ENCODE measurements at regions of chr15 and their contacts with region 1.

Region 1: GRCh38 chr15:70770863-70771262 is 7.5 kb upstream of the UACA start:
- DNase-seq: no peak
- ATAC-seq: no peak
- H3K4me3 ChIP-seq: no peak overlapping the region
- H3K27ac ChIP-seq: peak overlapping the region in 2 of 4 donors; percentile 7 to 13
- H3K4me1 ChIP-seq: peaks cover 23% of the 10 kb centered on the region in 2 donors
- H3K27me3 ChIP-seq: no peaks in the 10 kb centered on the region
- CTCF ChIP-seq: no peak
- POLR2A ChIP-seq: no peak

Region 2: GRCh38 chr15:70806992-70807712 is 36.3 kb after region 1 on chr15:
- in situ Hi-C with region 1: no loop called
- intact Hi-C with region 1: loop called (anchors 5 kb)
- DNase-seq: peak; percentile 22 to 46
- ATAC-seq: no peak
- H3K4me3 ChIP-seq: no peak overlapping the region
- H3K27ac ChIP-seq: peak overlapping the region in 1 of 4 donors; percentile 2
- H3K4me1 ChIP-seq: peaks cover 0 to 14% of the 10 kb centered on the region in 2 donors
- H3K27me3 ChIP-seq: no peaks in the 10 kb centered on the region
- CTCF ChIP-seq: no peak
- POLR2A ChIP-seq: no peak

Region 3: GRCh38 chr15:71024657-71025056 is 253.8 kb after region 1 on chr15:
- in situ Hi-C with region 1: no loop called
- intact Hi-C with region 1: no loop called
- DNase-seq: no peak
- ATAC-seq: no peak
- H3K4me3 ChIP-seq: no peak overlapping the region
- H3K27ac ChIP-seq: no peak overlapping the region
- H3K4me1 ChIP-seq: no peaks in the 10 kb centered on the region
- H3K27me3 ChIP-seq: no peaks in the 10 kb centered on the region
- CTCF ChIP-seq: no peak
- POLR2A ChIP-seq: no peak